ENCODE measurements at regions of chr2 and their contacts with region 1.

Region 1: DNA sequence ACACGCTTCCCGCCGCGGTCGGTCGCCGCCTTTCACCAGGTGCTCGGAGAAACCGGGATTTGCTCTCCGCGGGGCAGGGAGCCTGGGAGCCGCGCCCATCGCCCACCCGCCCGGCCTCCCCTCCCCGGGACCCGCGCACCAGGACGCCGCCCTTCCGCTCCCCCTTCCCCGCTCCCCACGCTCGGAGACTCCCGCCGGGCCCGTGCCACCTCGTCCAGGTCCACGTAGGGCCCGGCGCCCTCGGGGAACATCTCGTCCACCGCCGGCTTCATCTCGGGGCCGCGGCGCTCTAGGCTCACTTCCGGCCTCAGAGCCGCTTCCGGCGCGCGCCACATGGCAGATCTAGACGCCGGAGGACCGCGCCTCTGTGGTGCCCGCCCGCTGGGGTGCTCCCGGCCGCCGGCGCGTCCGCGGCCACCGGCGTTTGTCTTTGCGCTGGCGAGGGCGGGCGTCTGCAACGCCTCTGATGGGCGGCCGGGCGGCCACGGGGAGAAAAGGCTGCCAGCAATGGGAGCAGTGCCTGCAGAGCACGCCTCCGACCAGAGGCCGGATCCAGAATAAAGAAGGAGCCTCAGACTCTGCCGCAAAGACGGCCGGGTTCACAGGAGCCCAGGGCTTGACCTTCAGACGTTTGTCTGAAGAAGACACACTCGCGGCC is at the start of gene COPS9:
- DNase-seq: peak; percentile 86 to 94 (median 89)
- ATAC-seq: peak; percentile 90 to 99 (median 98)
- H3K4me3 ChIP-seq: peak within 1 kb of the TSS; percentile 70 to 99 (median 92)
- H3K27ac ChIP-seq: peak within 1 kb of the TSS; percentile 21 to 85 (median 72)
- H3K4me1 ChIP-seq: peaks cover 5 to 22% (median 10%) of the 10 kb centered on the region in 12 donors
- H3K27me3 ChIP-seq: no peaks in the 10 kb centered on the region
- CTCF ChIP-seq: peak in 1 of 12 donors; percentile 40
- POLR2A ChIP-seq: peak in 1 of 2 donors; percentile 48
- total RNA-seq, gene COPS9: 130 to 262 (median 166) TPM

Region 2: GRCh38 chr2:239895669-239896068 is 240.5 kb before region 1 on chr2:
- intact Hi-C with region 1: no loop called
- DNase-seq: peak in 1 of 5 donors; percentile 6
- ATAC-seq: no peak
- H3K4me3 ChIP-seq: no peak overlapping the region
- H3K27ac ChIP-seq: peak overlapping the region in 1 of 12 donors; percentile 62
- H3K4me1 ChIP-seq: peaks cover 0 to 6% (median 0%) of the 10 kb centered on the region in 12 donors
- H3K27me3 ChIP-seq: peaks cover 0 to 34% (median 0%) of the 10 kb centered on the region in 9 donors
- CTCF ChIP-seq: no peak
- POLR2A ChIP-seq: no peak

Region 3: GRCh38 chr2:239966029-239966852 is 169.9 kb before region 1 on chr2:
- intact Hi-C with region 1: no loop called
- DNase-seq: peak in 2 of 5 donors; percentile 17 to 56
- ATAC-seq: peak in 2 of 4 donors; percentile 43 to 60
- H3K4me3 ChIP-seq: no peak overlapping the region
- H3K27ac ChIP-seq: no peak overlapping the region
- H3K4me1 ChIP-seq: peaks cover 0 to 14% (median 0%) of the 10 kb centered on the region in 12 donors
- H3K27me3 ChIP-seq: no peaks in the 10 kb centered on the region
- CTCF ChIP-seq: no peak
- POLR2A ChIP-seq: no peak

Region 4: GRCh38 chr2:240021488-240022104 is 114.5 kb before region 1 on chr2:
- intact Hi-C with region 1: loop called in 1 of 10 experiments (anchors 2 kb)
- DNase-seq: peak; percentile 31 to 78 (median 57)
- ATAC-seq: peak in 1 of 4 donors; percentile 24
- H3K4me3 ChIP-seq: no peak overlapping the region
- H3K27ac ChIP-seq: no peak overlapping the region
- H3K4me1 ChIP-seq: peaks cover 0 to 33% (median 15%) of the 10 kb centered on the region in 12 donors
- H3K27me3 ChIP-seq: no peaks in the 10 kb centered on the region
- CTCF ChIP-seq: peak; percentile 54 to 82 (median 71)
- POLR2A ChIP-seq: no peak